ENCODE measurements at regions of chr19 and their contacts with region 1.

Region 1: GRCh38 chr19:12551060-12551832 is at the start of gene ZNF564:
- DNase-seq: peak; percentile 99
- H3K4me3 ChIP-seq: peak within 1 kb of the TSS; percentile 85 to 94
- H3K27ac ChIP-seq: peak within 1 kb of the TSS; percentile 93 to 98
- H3K4me1 ChIP-seq: peaks cover 10% of the 10 kb centered on the region
- H3K27me3 ChIP-seq: no peaks in the 10 kb centered on the region
- CTCF ChIP-seq: no peak
- POLR2A ChIP-seq: no peak
- total RNA-seq, gene ZNF564: 10.7 to 18.0 TPM

Region 2: GRCh38 chr19:12411893-12412292 is 139.4 kb before region 1 on chr19:
- intact Hi-C with region 1: no loop called
- DNase-seq: no peak
- H3K4me3 ChIP-seq: no peak overlapping the region
- H3K27ac ChIP-seq: no peak overlapping the region
- H3K4me1 ChIP-seq: no peaks in the 10 kb centered on the region
- H3K27me3 ChIP-seq: no peaks in the 10 kb centered on the region
- CTCF ChIP-seq: no peak
- POLR2A ChIP-seq: no peak

Region 3: DNA sequence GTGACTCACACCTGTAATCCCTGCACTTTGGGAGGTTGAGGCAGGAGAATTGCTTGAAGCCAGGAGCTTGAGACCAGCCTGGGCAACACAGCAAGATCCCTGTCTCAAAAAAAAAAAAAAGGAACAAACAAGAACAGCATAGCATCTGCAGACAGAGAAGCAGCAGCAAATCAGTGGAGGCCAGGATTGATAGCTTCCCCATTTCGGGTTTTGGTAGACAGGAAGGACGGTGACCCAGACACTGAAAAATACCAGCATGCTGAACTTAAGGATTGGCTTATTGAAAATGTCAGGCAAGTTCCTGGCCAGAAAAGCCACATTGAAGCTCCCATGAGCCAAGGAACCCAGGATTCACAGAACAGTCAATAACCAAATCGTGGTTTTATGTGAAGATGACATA is 56.4 kb after region 1 on chr19:
- intact Hi-C with region 1: loop called (anchors 2 kb)
- DNase-seq: no peak
- H3K4me3 ChIP-seq: no peak overlapping the region
- H3K27ac ChIP-seq: no peak overlapping the region
- H3K4me1 ChIP-seq: peaks cover 13% of the 10 kb centered on the region
- H3K27me3 ChIP-seq: no peaks in the 10 kb centered on the region
- CTCF ChIP-seq: no peak
- POLR2A ChIP-seq: no peak

Region 4: GRCh38 chr19:12628040-12629022 is 77.1 kb after region 1 on chr19:
- intact Hi-C with region 1: no loop called
- DNase-seq: no peak
- H3K4me3 ChIP-seq: no peak overlapping the region
- H3K27ac ChIP-seq: no peak overlapping the region
- H3K4me1 ChIP-seq: no peaks in the 10 kb centered on the region
- H3K27me3 ChIP-seq: no peaks in the 10 kb centered on the region
- CTCF ChIP-seq: no peak
- POLR2A ChIP-seq: no peak